Calu3 (cell line): ENCODE measurements at regions of chr2 and their contacts with region 1.

Region 1: DNA sequence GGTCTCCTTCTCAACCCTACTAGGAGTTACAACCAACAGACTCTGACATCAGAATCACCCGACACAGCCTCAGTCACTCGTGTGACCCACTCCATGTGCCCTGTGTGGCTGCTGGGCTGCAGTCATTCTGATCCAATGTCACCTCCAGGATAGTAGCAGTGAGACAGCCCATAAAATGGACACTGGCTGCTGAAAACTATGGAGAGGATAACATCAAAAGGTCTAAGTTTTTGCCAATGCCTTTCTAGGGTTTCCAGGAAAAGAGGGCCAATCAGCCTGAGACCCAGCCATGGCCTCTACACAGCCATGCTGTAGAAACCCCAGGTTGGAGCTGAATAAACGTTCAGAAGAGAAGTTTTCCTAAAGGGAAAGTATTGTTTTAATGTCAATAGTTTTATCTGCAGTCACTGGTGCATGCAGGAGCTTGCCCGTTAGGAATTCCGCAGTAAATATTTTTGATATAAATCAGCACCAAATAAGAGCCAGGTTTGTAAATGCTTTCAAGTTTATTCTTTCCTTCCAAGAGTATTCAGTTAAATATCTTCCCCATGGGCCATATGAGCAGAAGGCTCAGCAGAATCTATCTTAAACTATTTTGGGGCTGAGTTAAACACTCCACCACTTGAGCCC is 92.2 kb upstream of the PID1 start:
- DNase-seq: no peak
- H3K4me3 Mint-ChIP-seq: no peak overlapping the region
- H3K27ac Mint-ChIP-seq: no peak overlapping the region
- H3K4me1 Mint-ChIP-seq: peaks cover 26% of the 10 kb centered on the region
- H3K27me3 Mint-ChIP-seq: no peaks in the 10 kb centered on the region
- CTCF ChIP-seq: no peak

Region 2: GRCh38 chr2:229408356-229408755 is 45.1 kb after region 1 on chr2:
- CTCF ChIA-PET with region 1: no interaction called
- intact Hi-C with region 1: loop called (anchors 5 kb)
- DNase-seq: peak; percentile 74
- H3K4me3 Mint-ChIP-seq: peak overlapping the region; percentile 11
- H3K27ac Mint-ChIP-seq: peak overlapping the region; percentile 100
- H3K4me1 Mint-ChIP-seq: peaks cover 47% of the 10 kb centered on the region
- H3K27me3 Mint-ChIP-seq: no peaks in the 10 kb centered on the region
- CTCF ChIP-seq: no peak

Region 3: GRCh38 chr2:229445019-229445418 is 81.7 kb after region 1 on chr2:
- CTCF ChIA-PET with region 1: no interaction called
- intact Hi-C with region 1: loop called (anchors 5 kb)
- DNase-seq: peak; percentile 68
- H3K4me3 Mint-ChIP-seq: peak overlapping the region; percentile 10
- H3K27ac Mint-ChIP-seq: peak overlapping the region; percentile 83
- H3K4me1 Mint-ChIP-seq: peaks cover 17% of the 10 kb centered on the region
- H3K27me3 Mint-ChIP-seq: no peaks in the 10 kb centered on the region
- CTCF ChIP-seq: no peak

Region 4: DNA sequence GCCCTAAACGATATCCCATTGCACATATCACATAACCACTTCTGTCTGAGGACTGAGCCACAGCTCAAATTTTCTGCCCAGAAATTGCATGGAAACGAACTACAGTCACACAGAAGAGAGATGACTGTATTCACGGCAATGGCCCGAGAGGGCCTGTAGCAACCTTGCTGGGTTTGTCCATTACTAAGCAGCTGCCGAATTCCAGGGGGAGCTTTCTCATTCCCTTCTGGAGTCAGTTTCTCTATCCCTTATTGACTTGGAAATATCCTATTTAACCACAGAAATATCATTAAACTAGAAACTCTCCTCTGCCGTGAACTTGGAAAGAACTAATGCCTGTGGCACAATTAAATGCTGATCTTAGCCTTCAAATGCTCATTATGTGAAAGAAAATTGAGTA is 167.1 kb after region 1 on chr2:
- CTCF ChIA-PET with region 1: no interaction called
- intact Hi-C with region 1: no loop called
- DNase-seq: no peak
- H3K4me3 Mint-ChIP-seq: no peak overlapping the region
- H3K27ac Mint-ChIP-seq: no peak overlapping the region
- H3K4me1 Mint-ChIP-seq: no peaks in the 10 kb centered on the region
- H3K27me3 Mint-ChIP-seq: no peaks in the 10 kb centered on the region
- CTCF ChIP-seq: no peak

Region 5: DNA sequence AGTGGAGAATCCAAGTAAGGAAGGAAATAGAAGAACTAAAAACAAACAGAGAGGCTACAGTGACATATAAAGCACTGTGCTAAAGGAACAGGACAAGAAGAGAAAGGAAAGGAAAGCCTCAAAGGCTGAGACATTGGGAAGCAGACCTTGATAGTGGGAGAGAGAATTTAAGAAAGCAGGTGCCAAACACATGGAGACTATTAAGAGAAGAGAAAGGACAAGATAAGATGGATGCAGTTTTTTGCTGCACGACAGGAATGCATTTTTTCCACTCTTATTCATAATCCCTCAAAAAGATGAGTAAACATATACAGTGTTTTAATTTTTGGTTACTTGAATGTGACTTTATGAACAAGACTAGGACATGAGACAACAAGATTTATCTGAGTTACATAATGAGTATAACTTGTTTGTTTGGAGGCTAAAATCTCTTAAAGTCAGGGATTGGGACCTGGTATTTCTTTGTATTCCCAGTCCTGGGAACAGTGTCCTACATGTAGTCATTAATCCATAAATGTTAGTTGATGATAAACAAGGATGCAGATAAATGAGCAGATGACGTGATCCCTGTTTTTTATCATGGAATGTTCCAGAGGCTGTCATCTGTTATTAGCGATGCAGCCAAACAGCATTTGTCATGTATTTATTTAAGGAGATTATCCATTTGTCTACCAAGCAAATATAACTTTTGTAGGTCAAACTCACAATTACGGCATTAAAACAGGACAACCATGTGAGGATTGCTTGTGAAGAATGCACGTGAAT is 209.4 kb after region 1 on chr2:
- CTCF ChIA-PET with region 1: no interaction called
- intact Hi-C with region 1: no loop called
- DNase-seq: no peak
- H3K4me3 Mint-ChIP-seq: no peak overlapping the region
- H3K27ac Mint-ChIP-seq: no peak overlapping the region
- H3K4me1 Mint-ChIP-seq: no peaks in the 10 kb centered on the region
- H3K27me3 Mint-ChIP-seq: no peaks in the 10 kb centered on the region
- CTCF ChIP-seq: no peak